MCF 10A (cell line): ENCODE measurements at regions of chr7 and their contacts with region 1.

Region 1: DNA sequence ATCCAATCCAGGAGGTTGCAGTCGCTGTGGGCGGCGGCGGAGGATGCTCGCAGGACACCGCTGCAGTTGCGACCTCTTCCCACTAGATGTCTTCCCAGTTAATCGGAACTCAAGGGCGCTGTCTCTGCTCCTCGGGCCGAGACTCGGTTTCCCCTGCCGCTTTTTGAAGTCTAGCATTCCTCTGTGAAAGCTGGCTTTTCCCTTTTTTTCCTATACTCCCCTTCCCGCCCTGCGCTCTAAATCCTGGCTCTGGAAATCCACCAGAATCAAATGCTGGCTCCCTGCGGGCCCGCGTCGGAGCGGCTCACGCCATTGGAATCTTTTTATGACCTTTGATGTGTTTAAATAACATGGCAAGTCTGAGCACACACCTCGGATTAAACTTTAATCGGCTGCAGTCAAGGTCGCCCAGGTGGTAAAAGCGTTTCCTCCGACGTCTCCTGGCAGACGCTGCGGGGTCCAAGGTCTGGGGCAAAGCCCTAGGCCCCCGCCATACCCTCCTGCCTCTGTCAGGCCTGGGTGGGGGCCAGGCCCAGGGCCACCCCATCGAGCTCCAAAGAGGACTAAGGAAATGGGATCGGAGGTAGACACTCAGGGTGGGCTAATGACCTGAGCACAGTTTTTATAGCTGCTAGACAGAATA is 10.7 kb upstream of the HOXA13 start:
- DNase-seq: peak; percentile 52
- H3K4me3 Mint-ChIP-seq: no peak overlapping the region
- H3K27ac Mint-ChIP-seq: no peak overlapping the region
- H3K4me1 Mint-ChIP-seq: no peaks in the 10 kb centered on the region
- H3K27me3 Mint-ChIP-seq: peaks cover 18% of the 10 kb centered on the region
- CTCF ChIP-seq: peak; percentile 81

Region 2: DNA sequence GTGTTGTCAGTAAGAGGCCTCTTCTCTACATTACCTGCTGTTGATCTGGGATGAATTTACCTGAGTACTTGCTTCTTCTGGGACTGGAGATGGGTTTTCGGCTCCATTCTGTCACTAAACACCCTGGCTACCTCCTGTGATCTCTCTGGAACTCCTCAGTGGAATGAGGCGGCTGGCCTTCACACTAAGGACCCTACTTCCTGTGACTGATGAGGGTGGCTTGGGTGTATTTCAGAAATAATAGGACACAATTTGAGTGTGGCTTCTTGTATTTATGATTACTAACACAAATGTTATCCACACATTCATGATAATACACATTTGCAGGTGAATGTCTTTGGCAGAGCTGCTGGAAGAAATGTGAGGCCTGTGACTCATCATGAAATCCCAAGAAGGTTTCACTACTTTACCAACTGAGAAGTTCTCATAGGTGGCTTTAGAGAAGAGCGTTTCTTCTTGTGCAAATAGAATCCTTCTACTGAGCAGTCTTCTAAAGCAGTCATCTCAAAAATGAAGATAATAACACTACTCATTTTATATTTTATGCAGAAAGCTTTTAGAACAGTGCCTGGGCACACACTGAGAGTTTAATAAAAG is 10.7 kb after region 1 on chr7:
- CTCF ChIA-PET with region 1: interaction called, 22 read pairs
- POLR2A ChIA-PET with region 1: interaction called, 3 read pairs
- intact Hi-C with region 1: no loop called
- DNase-seq: peak; percentile 23
- H3K4me3 Mint-ChIP-seq: no peak overlapping the region
- H3K27ac Mint-ChIP-seq: no peak overlapping the region
- H3K4me1 Mint-ChIP-seq: peaks cover 7% of the 10 kb centered on the region
- H3K27me3 Mint-ChIP-seq: no peaks in the 10 kb centered on the region
- CTCF ChIP-seq: no peak

Region 3: DNA sequence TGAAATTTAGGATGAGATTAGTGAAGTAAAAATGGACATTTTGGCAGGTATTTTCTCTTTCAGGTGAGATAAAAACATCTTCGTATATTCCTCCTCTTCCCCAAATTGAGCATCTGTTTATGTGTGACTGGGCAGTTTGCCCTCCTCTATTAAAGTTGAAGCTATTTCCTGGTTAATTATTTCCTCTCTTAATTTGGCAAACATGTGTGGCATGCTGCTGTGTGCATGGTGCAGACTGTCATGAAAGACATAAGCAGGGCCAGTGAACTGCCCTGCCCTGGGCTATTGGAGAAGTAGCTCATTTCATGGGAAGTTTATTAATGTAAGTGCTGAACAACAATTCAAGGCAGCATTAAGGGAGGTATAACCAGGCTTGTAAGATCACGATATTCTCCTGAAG is 84.7 kb after region 1 on chr7:
- CTCF ChIA-PET with region 1: no interaction called
- POLR2A ChIA-PET with region 1: no interaction called
- intact Hi-C with region 1: no loop called
- DNase-seq: no peak
- H3K4me3 Mint-ChIP-seq: no peak overlapping the region
- H3K27ac Mint-ChIP-seq: no peak overlapping the region
- H3K4me1 Mint-ChIP-seq: no peaks in the 10 kb centered on the region
- H3K27me3 Mint-ChIP-seq: no peaks in the 10 kb centered on the region
- CTCF ChIP-seq: no peak

Region 4: GRCh38 chr7:27551803-27552400 is 341.3 kb after region 1 on chr7:
- CTCF ChIA-PET with region 1: interaction called, 12 read pairs
- POLR2A ChIA-PET with region 1: no interaction called
- intact Hi-C with region 1: no loop called
- DNase-seq: no peak
- H3K4me3 Mint-ChIP-seq: no peak overlapping the region
- H3K27ac Mint-ChIP-seq: no peak overlapping the region
- H3K4me1 Mint-ChIP-seq: peaks cover 18% of the 10 kb centered on the region
- H3K27me3 Mint-ChIP-seq: no peaks in the 10 kb centered on the region
- CTCF ChIP-seq: no peak

Region 5: DNA sequence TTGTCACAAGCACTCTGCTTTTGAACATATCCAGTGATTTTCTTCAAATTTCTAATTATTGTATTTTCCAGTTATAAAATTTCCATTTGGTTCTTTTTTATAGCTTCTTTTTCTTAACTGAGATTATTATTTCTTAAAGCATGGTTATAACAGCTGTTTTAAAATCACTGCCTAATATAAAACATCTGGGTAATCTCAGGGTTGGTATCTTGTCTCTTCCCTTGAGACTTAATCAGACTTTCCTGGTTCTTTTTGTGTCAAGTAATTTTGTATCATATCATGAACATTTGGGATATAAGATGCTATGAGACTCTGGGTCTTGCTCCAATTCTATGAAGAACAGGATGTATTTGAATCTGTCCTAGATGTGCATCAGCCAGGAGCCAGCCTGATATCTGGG is 358.5 kb after region 1 on chr7:
- CTCF ChIA-PET with region 1: interaction called, 71 read pairs
- POLR2A ChIA-PET with region 1: no interaction called
- intact Hi-C with region 1: no loop called
- DNase-seq: no peak
- H3K4me3 Mint-ChIP-seq: no peak overlapping the region
- H3K27ac Mint-ChIP-seq: no peak overlapping the region
- H3K4me1 Mint-ChIP-seq: no peaks in the 10 kb centered on the region
- H3K27me3 Mint-ChIP-seq: no peaks in the 10 kb centered on the region
- CTCF ChIP-seq: no peak

Region 6: GRCh38 chr7:27576360-27576944 is 365.9 kb after region 1 on chr7:
- CTCF ChIA-PET with region 1: interaction called, 71 read pairs
- POLR2A ChIA-PET with region 1: no interaction called
- intact Hi-C with region 1: loop called (anchors 1 kb)
- DNase-seq: peak; percentile 63
- H3K4me3 Mint-ChIP-seq: no peak overlapping the region
- H3K27ac Mint-ChIP-seq: no peak overlapping the region
- H3K4me1 Mint-ChIP-seq: peaks cover 5% of the 10 kb centered on the region
- H3K27me3 Mint-ChIP-seq: no peaks in the 10 kb centered on the region
- CTCF ChIP-seq: peak; percentile 44